AG04449 (cell line): ENCODE measurements at regions of chr2 and their contacts with region 1.

Region 1: DNA sequence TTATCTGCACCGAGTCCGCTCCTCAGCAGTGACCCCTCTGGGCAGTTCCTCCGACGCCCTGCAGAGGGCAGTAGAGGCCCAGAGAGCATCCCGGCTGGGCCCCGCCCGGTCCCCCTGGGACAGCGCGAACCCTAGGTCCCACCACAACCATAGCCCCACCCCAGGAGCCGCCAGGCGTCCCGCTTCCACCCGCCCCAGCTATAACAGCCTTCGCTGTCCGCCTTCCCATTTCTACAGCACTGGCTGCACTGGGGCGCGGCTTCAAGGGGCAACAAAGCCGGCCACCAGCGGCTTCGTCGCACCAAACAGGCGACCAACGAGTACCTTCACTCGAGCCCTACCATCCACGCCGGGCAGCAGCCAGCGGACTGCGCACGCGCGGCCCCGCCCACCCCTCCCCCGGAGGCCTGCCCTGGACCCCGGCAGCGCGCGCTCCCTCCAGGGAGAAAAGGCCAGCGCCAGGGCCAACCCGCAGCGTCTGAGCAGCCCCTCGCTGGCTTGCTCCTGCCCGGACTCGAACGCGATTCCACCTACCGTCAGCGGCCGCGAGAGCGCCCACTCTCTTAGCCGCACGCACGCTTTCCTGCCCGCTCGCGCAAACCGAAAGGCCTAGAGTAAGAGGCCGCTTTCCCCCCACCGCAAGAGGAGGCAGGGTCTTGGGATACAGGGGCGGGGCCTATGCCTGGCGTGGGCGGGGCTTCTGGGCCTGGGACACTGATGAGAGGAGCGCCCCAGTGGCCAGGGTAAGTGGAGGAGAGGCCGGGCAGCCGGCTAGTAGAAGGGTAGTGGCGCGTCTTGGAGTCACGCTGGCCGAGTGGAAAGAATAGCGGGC is at the start of gene NHEJ1:
- DNase-seq: no peak
- H3K4me3 ChIP-seq: peak within 1 kb of the TSS; percentile 87
- CTCF ChIP-seq: peak; percentile 96

Region 2: DNA sequence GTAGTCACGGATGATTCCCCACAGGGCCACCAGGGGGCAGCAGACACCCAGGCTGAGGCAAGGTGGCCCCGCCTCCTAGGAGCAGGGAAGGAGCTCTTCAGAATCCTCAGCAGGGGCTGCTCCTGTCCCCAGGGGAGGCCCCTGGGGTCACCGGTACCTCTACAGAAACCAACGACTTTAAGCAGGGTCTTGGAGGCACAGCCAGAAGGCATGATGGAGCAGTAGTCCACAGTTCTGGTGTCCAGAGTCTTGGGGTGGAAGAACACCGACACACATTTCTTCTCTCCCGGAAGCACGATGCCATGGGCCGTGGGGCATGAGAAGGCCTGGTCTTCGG is 130.6 kb before region 1 on chr2:
- CTCF ChIA-PET with region 1: interaction called, 366 read pairs
- POLR2A ChIA-PET with region 1: no interaction called
- DNase-seq: peak; percentile 2
- H3K4me3 ChIP-seq: no peak overlapping the region
- CTCF ChIP-seq: peak; percentile 94

Region 3: DNA sequence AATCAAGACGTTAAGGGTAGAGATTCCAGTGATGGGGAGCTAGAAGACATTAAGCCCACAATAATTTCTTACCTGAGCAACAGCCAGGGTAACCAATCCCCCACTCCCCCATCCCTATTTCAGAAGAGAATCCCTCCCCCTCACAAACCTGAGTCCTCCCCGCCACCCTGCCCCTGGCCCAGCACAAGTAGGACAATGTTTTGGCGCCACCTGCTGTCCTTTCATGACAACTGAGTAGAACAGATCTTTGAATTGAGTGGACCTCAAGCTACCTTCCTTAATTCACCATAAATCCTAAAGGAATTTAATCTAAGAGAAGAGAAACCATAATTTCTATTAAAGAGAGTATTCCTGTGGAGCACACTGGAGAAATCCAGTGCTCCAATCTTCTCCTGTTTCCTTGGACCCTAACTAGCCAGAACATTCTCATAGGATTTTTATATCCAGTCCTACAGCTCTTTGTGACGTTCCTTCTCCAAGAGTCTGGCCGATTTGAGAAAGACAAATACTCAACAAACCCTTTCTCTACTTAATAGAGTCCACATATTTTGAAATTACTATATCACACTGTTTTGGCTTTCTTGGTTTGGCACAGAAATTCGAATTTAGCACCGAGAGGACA is 40.9 kb before region 1 on chr2:
- CTCF ChIA-PET with region 1: interaction called, 58 read pairs
- POLR2A ChIA-PET with region 1: no interaction called
- DNase-seq: no peak
- H3K4me3 ChIP-seq: no peak overlapping the region
- CTCF ChIP-seq: peak; percentile 69

Region 4: GRCh38 chr2:219171231-219171651 is 10.8 kb after region 1 on chr2:
- CTCF ChIA-PET with region 1: interaction called, 111 read pairs
- POLR2A ChIA-PET with region 1: no interaction called
- DNase-seq: peak; percentile 75
- H3K4me3 ChIP-seq: no peak overlapping the region
- CTCF ChIP-seq: peak; percentile 27

Region 5: GRCh38 chr2:219218732-219219701 is 58.6 kb after region 1 on chr2 and contains the start of gene ABCB6:
- CTCF ChIA-PET with region 1: interaction called, 30 read pairs
- POLR2A ChIA-PET with region 1: interaction called, 4 read pairs
- DNase-seq: no peak
- H3K4me3 ChIP-seq: peak within 1 kb of the TSS; percentile 69
- CTCF ChIP-seq: no peak

Region 6: GRCh38 chr2:219530048-219530963 is 369.9 kb after region 1 on chr2:
- CTCF ChIA-PET with region 1: interaction called, 12 read pairs
- POLR2A ChIA-PET with region 1: no interaction called
- DNase-seq: no peak
- H3K4me3 ChIP-seq: peak overlapping the region; percentile 49
- CTCF ChIP-seq: peak; percentile 98

Region 7: DNA sequence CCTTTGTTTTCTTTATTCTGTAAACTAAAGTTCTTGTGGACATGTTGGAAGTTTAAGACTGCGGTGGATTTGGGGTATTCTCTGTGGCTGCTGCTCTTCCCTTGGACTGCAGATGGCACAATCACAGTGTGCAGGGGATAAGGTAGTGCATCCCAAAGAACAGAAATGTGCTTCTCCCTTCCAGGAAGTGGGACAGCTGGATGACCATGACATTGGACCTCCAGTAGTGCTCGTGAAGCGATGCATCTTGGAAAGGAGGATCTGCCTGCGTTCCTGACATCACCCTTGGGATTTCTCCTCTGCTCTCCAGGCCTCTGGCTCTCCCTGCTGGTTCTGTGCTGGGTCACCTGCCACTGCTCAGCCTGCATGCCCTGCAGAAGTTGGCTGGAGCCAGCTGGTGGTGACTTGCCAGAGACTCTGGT is 576.9 kb after region 1 on chr2:
- CTCF ChIA-PET with region 1: no interaction called
- POLR2A ChIA-PET with region 1: no interaction called
- DNase-seq: no peak
- H3K4me3 ChIP-seq: no peak overlapping the region
- CTCF ChIP-seq: peak; percentile 60